CD14-positive monocyte (primary cell): ENCODE measurements at regions of chr2 and their contacts with region 1.

Region 1: GRCh38 chr2:218360447-218360846 is 3.8 kb downstream of the CATIP start:
- DNase-seq: peak; percentile 87 to 92 (median 87)
- H3K4me3 ChIP-seq: peak overlapping the region in 1 of 3 experiments; percentile 11
- H3K4me3 Mint-ChIP-seq: peak overlapping the region in 1 of 2 donors; percentile 36
- H3K27ac ChIP-seq: peak overlapping the region; percentile 87 to 99
- H3K27ac Mint-ChIP-seq: peak overlapping the region; percentile 86 to 100 (median 97)
- H3K4me1 ChIP-seq: peaks cover 75 to 82% of the 10 kb centered on the region in 2 donors
- H3K4me1 Mint-ChIP-seq: peaks cover 80% of the 10 kb centered on the region
- H3K27me3 ChIP-seq: no peaks in the 10 kb centered on the region
- H3K27me3 Mint-ChIP-seq: peaks cover 0 to 2% (median 1%) of the 10 kb centered on the region in 3 donors
- CTCF ChIP-seq: no peak

Region 2: GRCh38 chr2:218194880-218195279 is 165.6 kb before region 1 on chr2:
- intact Hi-C with region 1: no loop called
- DNase-seq: no peak
- H3K4me3 ChIP-seq: no peak overlapping the region
- H3K4me3 Mint-ChIP-seq: no peak overlapping the region
- H3K27ac ChIP-seq: no peak overlapping the region
- H3K27ac Mint-ChIP-seq: no peak overlapping the region
- H3K4me1 ChIP-seq: peaks cover 23% of the 10 kb centered on the region in 2 donors
- H3K4me1 Mint-ChIP-seq: peaks cover 27% of the 10 kb centered on the region
- H3K27me3 ChIP-seq: no peaks in the 10 kb centered on the region
- H3K27me3 Mint-ChIP-seq: peaks cover 0 to 6% (median 0%) of the 10 kb centered on the region in 3 donors
- CTCF ChIP-seq: no peak

Region 3: DNA sequence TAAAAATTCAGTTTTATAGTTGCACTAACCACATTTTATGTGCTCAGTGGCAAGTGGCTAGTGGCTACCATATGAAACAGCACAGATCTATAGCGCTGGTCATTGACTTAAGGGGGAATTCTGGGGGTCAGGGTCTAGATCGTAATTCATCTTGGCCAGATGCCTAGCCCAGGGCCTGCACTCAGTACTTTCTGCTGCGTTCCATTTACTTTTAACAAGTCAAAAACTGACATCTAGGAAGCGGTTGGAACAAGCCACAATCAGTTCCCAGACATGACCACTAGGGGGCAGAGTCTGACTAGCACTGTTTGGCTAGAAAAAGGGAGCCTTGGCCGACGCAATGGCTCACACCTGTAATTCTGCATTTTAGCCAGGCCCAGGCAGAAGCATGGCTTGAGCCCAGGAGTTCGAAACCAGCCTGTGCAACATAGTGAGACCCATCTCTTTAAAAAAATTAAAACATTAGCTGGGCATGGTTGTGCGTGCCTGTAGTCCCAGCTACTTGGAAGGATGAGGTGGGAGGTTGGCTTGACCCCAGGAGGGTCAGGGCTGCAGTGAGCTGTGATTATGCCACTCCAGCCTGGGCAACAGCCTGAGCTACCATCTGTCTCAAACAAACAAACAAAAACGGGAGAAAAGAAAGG is 59.1 kb before region 1 on chr2:
- intact Hi-C with region 1: loop called (anchors 2 kb)
- DNase-seq: peak; percentile 79 to 93 (median 84)
- H3K4me3 ChIP-seq: no peak overlapping the region
- H3K4me3 Mint-ChIP-seq: no peak overlapping the region
- H3K27ac ChIP-seq: no peak overlapping the region
- H3K27ac Mint-ChIP-seq: peak overlapping the region in 5 of 7 donors; percentile 42 to 82 (median 66)
- H3K4me1 ChIP-seq: peaks cover 2 to 8% of the 10 kb centered on the region in 2 donors
- H3K4me1 Mint-ChIP-seq: peaks cover 13% of the 10 kb centered on the region
- H3K27me3 ChIP-seq: no peaks in the 10 kb centered on the region
- H3K27me3 Mint-ChIP-seq: peaks cover 0 to 4% (median 0%) of the 10 kb centered on the region in 3 donors
- CTCF ChIP-seq: peak; percentile 92

Region 4: GRCh38 chr2:218317232-218317630 is 43.2 kb before region 1 on chr2:
- intact Hi-C with region 1: no loop called
- DNase-seq: no peak
- H3K4me3 ChIP-seq: peak overlapping the region in 1 of 3 experiments; percentile 33
- H3K4me3 Mint-ChIP-seq: no peak overlapping the region
- H3K27ac ChIP-seq: peak overlapping the region; percentile 75 to 89
- H3K27ac Mint-ChIP-seq: peak overlapping the region; percentile 88 to 99 (median 96)
- H3K4me1 ChIP-seq: peaks cover 84 to 87% of the 10 kb centered on the region in 2 donors
- H3K4me1 Mint-ChIP-seq: peaks cover 83% of the 10 kb centered on the region
- H3K27me3 ChIP-seq: no peaks in the 10 kb centered on the region
- H3K27me3 Mint-ChIP-seq: peaks cover 0 to 2% (median 0%) of the 10 kb centered on the region in 3 donors
- CTCF ChIP-seq: no peak

Region 5: GRCh38 chr2:218329027-218329825 is 31.2 kb before region 1 on chr2:
- intact Hi-C with region 1: loop called in 1 of 2 experiments (anchors 5 kb)
- DNase-seq: peak in 1 of 3 donors; percentile 72
- H3K4me3 ChIP-seq: peak overlapping the region in 1 of 3 experiments; percentile 39
- H3K4me3 Mint-ChIP-seq: peak overlapping the region; percentile 41 to 77
- H3K27ac ChIP-seq: peak overlapping the region; percentile 62 to 69
- H3K27ac Mint-ChIP-seq: peak overlapping the region; percentile 64 to 90 (median 87)
- H3K4me1 ChIP-seq: peaks cover 96 to 99% of the 10 kb centered on the region in 2 donors
- H3K4me1 Mint-ChIP-seq: peaks cover 94% of the 10 kb centered on the region
- H3K27me3 ChIP-seq: no peaks in the 10 kb centered on the region
- H3K27me3 Mint-ChIP-seq: peaks cover 0 to 9% (median 1%) of the 10 kb centered on the region in 3 donors
- CTCF ChIP-seq: no peak